Motor neuron (in vitro differentiated cells): ENCODE measurements at regions of chr14 and their contacts with region 1.

Region 1: DNA sequence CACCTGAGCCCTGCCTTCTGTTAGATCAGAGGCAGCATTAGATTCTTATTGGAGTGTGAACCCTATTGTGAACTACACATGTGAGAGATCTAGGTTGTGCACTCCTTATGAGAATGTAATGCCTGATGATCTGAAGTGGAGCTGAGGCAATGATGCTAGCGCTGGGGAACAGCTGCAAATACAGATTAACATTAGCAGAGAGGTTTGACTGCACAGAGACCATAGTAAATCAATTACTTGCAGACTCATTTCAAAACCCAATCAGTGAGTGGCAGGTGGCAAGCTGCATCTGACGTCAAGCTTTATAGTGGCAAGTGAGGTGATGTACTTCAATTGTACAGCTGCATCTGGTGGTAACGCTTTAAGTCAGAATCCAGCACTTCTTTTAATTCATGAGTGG is 141.6 kb downstream of the GPHN start:
- ATAC-seq: peak in 5 of 8 experiments; percentile 50 to 67 (median 63)
- H3K4me3 ChIP-seq: no peak overlapping the region
- H3K27ac ChIP-seq: peak overlapping the region in 1 of 2 donors; percentile 13
- H3K4me1 ChIP-seq: peaks cover 13 to 26% of the 10 kb centered on the region in 2 donors

Region 2: GRCh38 chr14:66206554-66206953 is 442.9 kb before region 1 on chr14:
- in situ Hi-C with region 1: no loop called
- ATAC-seq: no peak
- H3K4me3 ChIP-seq: no peak overlapping the region
- H3K27ac ChIP-seq: no peak overlapping the region
- H3K4me1 ChIP-seq: no peaks in the 10 kb centered on the region

Region 3: GRCh38 chr14:67137744-67138371 is 488.4 kb after region 1 on chr14:
- in situ Hi-C with region 1: loop called in 2 of 9 experiments (anchors 25 kb)
- ATAC-seq: no peak
- H3K4me3 ChIP-seq: no peak overlapping the region
- H3K27ac ChIP-seq: no peak overlapping the region
- H3K4me1 ChIP-seq: no peaks in the 10 kb centered on the region